Heart right ventricle (tissue), 16 donors: ENCODE measurements at regions of chr7 and their contacts with region 1.

Region 1: GRCh38 chr7:191981-192649 is at the start of gene FAM20C:
- DNase-seq: peak; percentile 85 to 87
- ATAC-seq: peak; percentile 80 to 90 (median 87)
- H3K4me3 ChIP-seq: peak within 1 kb of the TSS; percentile 51 to 90 (median 72)
- H3K27ac ChIP-seq: peak within 1 kb of the TSS; percentile 55 to 95 (median 92)
- H3K4me1 ChIP-seq: peaks cover 14 to 41% (median 39%) of the 10 kb centered on the region in 9 donors
- H3K27me3 ChIP-seq: peaks cover 0 to 26% (median 0%) of the 10 kb centered on the region in 7 donors
- CTCF ChIP-seq: no peak
- total RNA-seq, gene FAM20C: 12.4 to 59.8 (median 19.2) TPM

Region 2: DNA sequence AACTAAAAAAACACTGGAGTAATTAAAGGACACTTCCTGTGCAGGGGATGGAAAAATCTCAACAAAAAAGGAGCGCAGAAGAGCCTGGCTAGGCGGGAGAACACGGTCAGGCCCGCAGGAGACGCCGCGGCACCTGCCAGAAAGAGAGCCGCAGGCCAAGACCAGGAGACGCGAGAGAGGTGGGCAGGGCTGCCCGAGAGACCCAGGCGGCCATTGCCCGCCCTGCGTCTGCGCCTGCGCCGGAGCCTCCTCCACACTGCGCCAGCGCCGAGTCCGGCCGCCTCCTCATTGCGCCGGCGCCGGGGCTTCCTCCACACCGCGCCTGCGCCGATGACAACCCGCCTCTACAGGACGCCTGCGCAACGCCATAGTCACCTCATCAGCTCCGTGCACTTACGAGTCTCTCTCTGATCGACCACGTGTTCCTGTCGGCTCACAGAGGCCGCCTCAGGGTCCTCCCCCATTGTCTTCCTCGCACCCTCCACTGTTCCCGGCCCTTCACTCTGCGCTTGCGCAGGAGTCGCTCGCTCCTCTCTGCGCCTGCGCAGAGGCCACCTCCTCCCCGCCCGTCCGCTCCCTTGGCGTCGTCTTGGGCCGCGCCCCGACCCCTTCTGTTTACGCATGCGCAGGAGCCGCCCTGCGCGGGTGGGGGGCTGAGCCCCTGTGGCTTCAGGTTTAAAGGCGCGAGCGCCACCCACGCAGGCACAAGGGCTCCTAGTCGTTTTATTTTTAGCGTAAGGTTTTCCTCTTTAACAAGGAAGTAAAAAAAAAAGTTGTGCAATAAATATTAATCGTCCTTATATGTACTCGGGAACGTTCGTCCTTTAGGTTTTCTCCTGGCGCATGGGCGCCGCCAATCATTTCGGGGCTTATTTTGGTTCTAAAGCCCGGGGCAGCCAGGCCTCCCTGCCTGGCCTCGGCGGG is 42.9 kb before region 1 on chr7:
- intact Hi-C with region 1: loop called in 4 of 10 experiments (anchors 2 to 5 kb)
- DNase-seq: peak; percentile 98
- ATAC-seq: peak; percentile 94 to 99 (median 98)
- H3K4me3 ChIP-seq: peak overlapping the region; percentile 41 to 72 (median 57)
- H3K27ac ChIP-seq: peak overlapping the region; percentile 90 to 99 (median 96)
- H3K4me1 ChIP-seq: peaks cover 4 to 36% (median 12%) of the 10 kb centered on the region in 9 donors
- H3K27me3 ChIP-seq: no peaks in the 10 kb centered on the region
- CTCF ChIP-seq: peak in 1 of 9 donors; percentile 9

Region 3: DNA sequence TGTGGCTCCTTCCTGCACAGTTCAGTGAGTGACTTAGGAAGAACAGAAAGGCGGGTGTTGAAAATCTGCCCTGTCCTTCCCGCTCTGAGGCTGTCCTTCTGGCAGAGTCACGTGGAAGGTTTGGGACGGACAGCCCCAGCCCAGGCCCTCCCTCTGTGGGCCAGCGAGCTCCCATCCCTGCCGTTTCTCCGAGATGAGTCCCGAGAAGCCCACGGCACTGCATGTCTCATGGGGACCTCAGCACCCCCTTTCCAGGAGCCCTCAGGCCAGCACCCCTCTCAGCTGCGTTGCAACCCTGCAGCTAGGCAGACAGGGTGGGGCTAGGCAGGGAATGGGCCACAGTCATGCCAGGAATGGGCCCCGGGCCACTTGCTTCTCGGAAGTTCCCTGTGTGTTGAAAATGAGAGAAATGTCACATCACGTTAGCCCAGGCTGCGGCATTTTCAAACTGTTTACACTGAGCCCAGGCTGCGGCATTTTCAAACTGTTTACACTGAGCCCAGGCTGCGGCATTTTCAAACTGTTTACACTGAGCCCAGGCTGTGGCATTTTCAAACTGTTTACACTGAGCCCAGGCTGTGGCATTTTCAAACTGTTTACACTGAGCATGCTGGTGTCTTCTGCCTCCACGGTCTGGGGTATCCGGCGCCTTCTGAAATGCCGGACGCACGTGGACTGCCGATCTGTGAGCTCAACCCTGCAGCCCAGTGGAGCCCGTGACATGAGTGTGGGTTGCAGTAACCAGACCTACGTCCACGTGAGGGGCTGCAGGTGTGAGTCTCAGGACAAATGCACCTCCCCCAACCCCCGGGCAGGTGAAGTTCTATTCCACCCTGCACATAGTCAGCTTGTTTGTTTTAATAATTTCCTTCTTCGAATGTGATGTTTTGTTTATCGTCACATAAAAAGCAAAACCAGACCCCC is 42.8 kb after region 1 on chr7:
- intact Hi-C with region 1: loop called in 1 of 10 experiments (anchors 5 kb)
- DNase-seq: peak; percentile 47 to 59
- ATAC-seq: peak; percentile 74 to 85 (median 80)
- H3K4me3 ChIP-seq: peak overlapping the region in 5 of 10 donors; percentile 14 to 41 (median 24)
- H3K27ac ChIP-seq: peak overlapping the region; percentile 64 to 90 (median 83)
- H3K4me1 ChIP-seq: peaks cover 37 to 62% (median 49%) of the 10 kb centered on the region in 9 donors
- H3K27me3 ChIP-seq: no peaks in the 10 kb centered on the region
- CTCF ChIP-seq: no peak